ENCODE measurements at regions of chr13 and their contacts with region 1.

Region 1: DNA sequence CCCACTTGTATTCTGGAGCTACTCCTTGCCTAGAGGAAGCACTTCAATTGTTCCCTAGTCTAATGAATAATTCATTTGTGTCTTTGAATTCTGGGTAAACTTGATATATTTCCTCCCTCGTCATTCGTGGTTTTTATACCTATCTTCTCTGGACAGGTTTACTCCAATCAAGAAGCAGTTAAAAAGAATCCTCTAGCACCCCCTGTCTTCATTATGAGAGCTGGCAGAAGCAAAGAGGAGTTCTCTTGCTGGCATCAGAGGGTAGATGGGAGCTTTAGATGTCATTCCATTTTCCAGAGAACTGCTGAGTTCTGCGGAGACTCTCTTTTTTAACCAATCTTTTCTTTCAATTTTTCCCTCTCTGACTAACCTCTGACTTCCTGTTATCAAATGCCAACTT is 627.7 kb downstream of the FGF9 start:
- DNase-seq: no peak
- ATAC-seq: no peak
- H3K4me3 ChIP-seq: no peak overlapping the region
- H3K27ac ChIP-seq: no peak overlapping the region
- H3K4me1 ChIP-seq: no peaks in the 10 kb centered on the region
- H3K27me3 ChIP-seq: no peaks in the 10 kb centered on the region

Region 2: GRCh38 chr13:21413013-21413412 is 885.5 kb before region 1 on chr13:
- intact Hi-C with region 1: no loop called
- DNase-seq: no peak
- ATAC-seq: no peak
- H3K4me3 ChIP-seq: no peak overlapping the region
- H3K27ac ChIP-seq: no peak overlapping the region
- H3K4me1 ChIP-seq: no peaks in the 10 kb centered on the region
- H3K27me3 ChIP-seq: no peaks in the 10 kb centered on the region

Region 3: GRCh38 chr13:22427066-22427465 is 128.5 kb after region 1 on chr13:
- intact Hi-C with region 1: no loop called
- DNase-seq: no peak
- ATAC-seq: no peak
- H3K4me3 ChIP-seq: no peak overlapping the region
- H3K27ac ChIP-seq: no peak overlapping the region
- H3K4me1 ChIP-seq: no peaks in the 10 kb centered on the region
- H3K27me3 ChIP-seq: no peaks in the 10 kb centered on the region

Region 4: GRCh38 chr13:23558675-23559536 is 1260.4 kb after region 1 on chr13:
- intact Hi-C with region 1: loop called in 1 of 2 experiments (anchors 10 kb)
- DNase-seq: peak in 1 of 2 donors; percentile 52
- ATAC-seq: peak; percentile 81
- H3K4me3 ChIP-seq: peak overlapping the region in 1 of 2 donors; percentile 23
- H3K27ac ChIP-seq: no peak overlapping the region
- H3K4me1 ChIP-seq: no peaks in the 10 kb centered on the region
- H3K27me3 ChIP-seq: no peaks in the 10 kb centered on the region

Measured in aorta (tissue), 5 donors.